ENCODE measurements at regions of chr3 and their contacts with region 1.

Region 1: DNA sequence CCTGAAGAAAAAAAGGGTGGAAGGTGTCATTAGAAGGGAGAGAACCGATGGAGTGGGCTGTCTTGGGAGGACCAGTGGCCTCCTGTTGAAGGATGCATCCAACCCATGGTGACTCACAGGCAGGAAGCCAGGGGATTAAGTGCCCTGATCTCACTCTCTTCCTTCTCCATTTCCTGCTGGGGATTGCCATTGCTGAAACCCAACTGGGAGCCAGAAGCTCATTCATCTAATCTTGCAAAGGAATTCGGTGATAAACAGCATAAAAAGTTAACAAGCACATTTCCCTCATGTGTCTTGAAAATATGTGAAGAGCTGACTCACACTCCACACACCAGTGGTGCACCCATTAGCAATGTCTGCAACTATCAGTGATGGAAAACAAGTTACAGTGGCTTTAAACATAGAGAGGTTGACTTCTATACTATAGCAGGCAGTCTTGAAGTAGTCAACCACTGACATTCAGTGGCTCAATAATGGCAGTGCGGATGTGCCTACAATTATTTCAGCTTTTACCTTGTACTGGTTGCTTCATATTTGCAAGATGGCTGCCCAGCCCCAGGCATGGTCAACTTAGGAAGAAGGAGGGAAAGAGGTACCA is 12.8 kb upstream of the CSRNP1 start:
- DNase-seq: no peak
- ATAC-seq: peak; percentile 60
- H3K4me3 Mint-ChIP-seq: no peak overlapping the region
- H3K27ac Mint-ChIP-seq: no peak overlapping the region
- H3K4me1 Mint-ChIP-seq: peaks cover 16% of the 10 kb centered on the region
- H3K27me3 Mint-ChIP-seq: no peaks in the 10 kb centered on the region

Region 2: GRCh38 chr3:38651154-38651789 is 515.0 kb before region 1 on chr3:
- CTCF ChIA-PET with region 1: no interaction called
- POLR2A ChIA-PET with region 1: no interaction called
- intact Hi-C with region 1: no loop called
- DNase-seq: peak; percentile 83
- ATAC-seq: peak; percentile 60
- H3K4me3 Mint-ChIP-seq: no peak overlapping the region
- H3K27ac Mint-ChIP-seq: no peak overlapping the region
- H3K4me1 Mint-ChIP-seq: peaks cover 13% of the 10 kb centered on the region
- H3K27me3 Mint-ChIP-seq: peaks cover 5% of the 10 kb centered on the region

Region 3: GRCh38 chr3:39086144-39086543 is 80.1 kb before region 1 on chr3:
- CTCF ChIA-PET with region 1: no interaction called
- POLR2A ChIA-PET with region 1: no interaction called
- intact Hi-C with region 1: no loop called
- DNase-seq: no peak
- ATAC-seq: no peak
- H3K4me3 Mint-ChIP-seq: no peak overlapping the region
- H3K27ac Mint-ChIP-seq: no peak overlapping the region
- H3K4me1 Mint-ChIP-seq: peaks cover 18% of the 10 kb centered on the region
- H3K27me3 Mint-ChIP-seq: no peaks in the 10 kb centered on the region

Region 4: DNA sequence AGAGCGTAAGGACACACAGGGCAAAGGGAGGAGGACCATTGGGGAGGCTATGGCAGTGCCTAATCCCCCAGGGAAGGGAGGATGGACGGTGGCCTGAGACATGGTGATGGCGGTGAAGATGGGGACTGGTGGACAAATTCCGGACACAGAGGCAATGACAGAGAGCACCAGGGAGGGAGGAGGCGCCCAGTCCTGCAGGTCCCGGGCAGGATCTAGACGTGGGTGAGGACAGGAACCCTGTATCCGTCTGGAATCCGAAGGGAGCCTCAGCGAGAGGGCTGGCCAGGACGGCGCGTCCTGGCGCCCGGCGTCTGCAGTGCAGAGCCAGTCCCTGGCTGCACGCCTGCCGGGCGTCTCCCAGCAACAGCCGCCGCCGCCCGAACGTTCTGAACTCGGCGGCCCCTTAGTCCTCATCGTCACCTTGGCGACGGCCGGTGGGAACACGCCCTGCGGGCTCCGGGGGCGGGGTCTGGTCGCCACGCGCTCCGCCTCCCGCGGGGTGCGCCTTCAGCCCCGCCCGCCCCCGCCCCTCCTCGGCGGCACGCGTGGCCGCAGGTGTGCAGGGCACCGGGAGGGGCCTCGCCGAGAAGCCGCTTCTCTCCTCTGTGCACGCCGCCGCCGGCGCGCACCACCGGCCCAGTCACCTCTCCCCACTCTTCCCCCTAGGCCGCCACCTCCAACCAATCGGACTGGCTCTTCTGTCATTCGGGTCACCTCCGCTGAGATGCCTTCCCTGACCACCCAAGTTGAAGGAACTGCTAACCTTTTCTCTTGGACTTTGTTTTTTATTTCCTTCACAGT is 14.5 kb after region 1 on chr3:
- CTCF ChIA-PET with region 1: interaction called, 17 read pairs
- POLR2A ChIA-PET with region 1: interaction called, 6 read pairs
- intact Hi-C with region 1: no loop called
- DNase-seq: peak; percentile 94
- ATAC-seq: peak; percentile 77
- H3K4me3 Mint-ChIP-seq: peak overlapping the region; percentile 77
- H3K27ac Mint-ChIP-seq: peak overlapping the region; percentile 82
- H3K4me1 Mint-ChIP-seq: peaks cover 48% of the 10 kb centered on the region
- H3K27me3 Mint-ChIP-seq: no peaks in the 10 kb centered on the region

Region 5: DNA sequence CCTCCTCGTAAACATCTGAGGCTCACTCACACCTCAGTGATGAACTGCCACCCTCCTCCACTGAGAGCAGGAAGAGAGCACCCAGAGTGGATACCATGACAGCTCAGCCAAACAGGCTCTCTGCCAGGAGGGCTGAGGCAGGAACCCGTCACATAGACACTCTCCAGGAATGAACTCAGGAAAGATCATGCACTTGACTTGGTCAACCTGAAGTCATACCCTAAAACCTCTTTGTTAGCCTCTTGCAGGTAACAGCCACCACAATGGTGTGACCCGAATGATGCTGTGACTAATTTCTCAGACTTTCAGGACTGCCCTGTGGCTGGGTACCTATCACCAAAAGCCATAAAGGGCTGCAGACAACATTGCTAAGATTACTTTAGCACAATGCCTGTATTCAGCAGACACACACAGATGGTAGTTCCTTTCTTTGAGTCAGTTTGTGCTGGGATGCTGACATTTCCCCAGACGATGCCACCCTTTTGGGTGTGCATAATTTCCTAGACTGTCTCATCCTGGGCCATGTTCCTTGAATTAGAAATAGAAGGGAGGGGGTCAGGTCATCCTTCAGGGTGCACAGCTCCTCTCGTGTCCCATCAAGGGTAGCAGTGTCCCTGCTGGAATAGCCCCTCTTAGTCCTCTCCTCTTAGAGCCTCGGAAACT is 83.4 kb after region 1 on chr3:
- CTCF ChIA-PET with region 1: no interaction called
- POLR2A ChIA-PET with region 1: no interaction called
- intact Hi-C with region 1: no loop called
- DNase-seq: no peak
- ATAC-seq: peak; percentile 12
- H3K4me3 Mint-ChIP-seq: no peak overlapping the region
- H3K27ac Mint-ChIP-seq: no peak overlapping the region
- H3K4me1 Mint-ChIP-seq: peaks cover 6% of the 10 kb centered on the region
- H3K27me3 Mint-ChIP-seq: no peaks in the 10 kb centered on the region